ENCODE measurements at regions of chr14 and their contacts with region 1.

Region 1: GRCh38 chr14:23120541-23121251 is 1.6 kb upstream of the CEBPE start:
- DNase-seq: peak; percentile 60
- ATAC-seq: peak; percentile 96
- H3K4me3 ChIP-seq: no peak overlapping the region; the same call in 1 of the 2 replicates
- H3K27ac ChIP-seq: peak overlapping the region; percentile 24; the same call in 1 of the 2 replicates
- H3K4me1 ChIP-seq: peaks cover 20% of the 10 kb centered on the region
- H3K27me3 ChIP-seq: no peaks in the 10 kb centered on the region; a peak in 2 of 4 replicates
- CTCF ChIP-seq: peak; percentile 100; a peak in 5 of 6 replicates
- EP300 ChIP-seq: no peak
- POLR2A ChIP-seq: no peak
- RAD21 ChIP-seq: peak; percentile 93

Region 2: GRCh38 chr14:23085458-23085857 is 35.2 kb before region 1 on chr14:
- CTCF ChIA-PET with region 1: interaction called, 23 read pairs
- POLR2A ChIA-PET with region 1: no interaction called
- RAD21 ChIA-PET with region 1: no interaction called
- SMC1A ChIA-PET with region 1: interaction called, 3 read pairs
- in situ Hi-C with region 1: no loop called
- intact Hi-C with region 1: no loop called
- DNase-seq: no peak
- ATAC-seq: no peak
- H3K4me3 ChIP-seq: no peak overlapping the region
- H3K27ac ChIP-seq: no peak overlapping the region
- H3K4me1 ChIP-seq: no peaks in the 10 kb centered on the region
- H3K27me3 ChIP-seq: no peaks in the 10 kb centered on the region
- CTCF ChIP-seq: no peak
- EP300 ChIP-seq: no peak
- POLR2A ChIP-seq: no peak
- RAD21 ChIP-seq: no peak

Region 3: GRCh38 chr14:23130871-23131270 is 10.2 kb after region 1 on chr14:
- CTCF ChIA-PET with region 1: interaction called, 24 read pairs
- POLR2A ChIA-PET with region 1: no interaction called
- RAD21 ChIA-PET with region 1: interaction called, 4 read pairs
- SMC1A ChIA-PET with region 1: interaction called, 10 read pairs
- in situ Hi-C with region 1: no loop called
- intact Hi-C with region 1: no loop called
- DNase-seq: no peak
- ATAC-seq: no peak
- H3K4me3 ChIP-seq: no peak overlapping the region
- H3K27ac ChIP-seq: no peak overlapping the region
- H3K4me1 ChIP-seq: no peaks in the 10 kb centered on the region
- H3K27me3 ChIP-seq: no peaks in the 10 kb centered on the region; a peak in 1 of 4 replicates
- CTCF ChIP-seq: no peak
- EP300 ChIP-seq: no peak
- POLR2A ChIP-seq: no peak
- RAD21 ChIP-seq: no peak

Region 4: GRCh38 chr14:23186913-23187654 is 66.4 kb after region 1 on chr14:
- CTCF ChIA-PET with region 1: interaction called, 127 read pairs
- POLR2A ChIA-PET with region 1: no interaction called
- RAD21 ChIA-PET with region 1: interaction called, 13 read pairs
- SMC1A ChIA-PET with region 1: interaction called, 34 read pairs
- in situ Hi-C with region 1: loop called (anchors 10 kb)
- intact Hi-C with region 1: loop called (anchors 1 kb)
- DNase-seq: peak; percentile 5
- ATAC-seq: peak; percentile 73
- H3K4me3 ChIP-seq: no peak overlapping the region
- H3K27ac ChIP-seq: no peak overlapping the region
- H3K4me1 ChIP-seq: peaks cover 7% of the 10 kb centered on the region; the same call in 1 of the 2 replicates
- H3K27me3 ChIP-seq: peaks cover 1 to 5% of the 10 kb centered on the region in 2 experiments; a peak in 3 of 4 replicates
- CTCF ChIP-seq: peak; percentile 58 to 67 (median 66)
- EP300 ChIP-seq: no peak
- POLR2A ChIP-seq: no peak
- RAD21 ChIP-seq: peak; percentile 71

Region 5: DNA sequence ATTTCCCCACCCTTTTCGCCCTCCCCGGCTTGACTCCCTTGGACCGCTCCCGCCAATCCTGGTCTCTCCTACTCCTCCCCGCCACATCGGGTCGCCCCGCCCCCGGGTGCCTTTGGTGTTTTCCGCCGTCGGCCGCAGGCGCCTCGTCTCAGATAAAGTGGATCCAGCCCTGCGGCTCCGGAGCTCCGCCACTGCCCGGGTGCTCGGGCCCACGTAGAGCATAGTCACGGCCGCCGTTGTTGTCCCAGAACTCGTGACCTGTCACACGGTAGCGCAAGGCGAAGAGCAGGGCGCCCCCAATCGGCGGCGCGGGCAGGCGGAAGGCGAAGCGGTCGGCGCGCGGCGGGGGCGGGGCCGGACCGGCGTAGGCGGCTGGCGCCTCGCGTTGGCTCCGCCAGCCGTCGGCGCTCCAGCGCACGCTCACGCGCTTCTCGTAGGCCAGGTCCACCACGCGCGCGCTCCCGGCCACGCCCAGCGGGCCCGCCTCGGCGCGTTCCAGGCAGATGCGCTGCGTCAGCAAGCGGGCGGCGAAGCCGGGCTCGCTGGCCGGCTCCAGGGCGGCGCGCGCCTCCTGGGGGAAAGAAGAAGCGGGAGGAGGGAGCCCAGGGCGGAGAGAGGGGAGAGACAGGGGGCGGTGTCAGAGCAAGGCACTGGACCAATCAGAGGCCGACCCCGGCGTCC is 180.7 kb after region 1 on chr14:
- CTCF ChIA-PET with region 1: interaction called, 40 read pairs
- POLR2A ChIA-PET with region 1: no interaction called
- RAD21 ChIA-PET with region 1: interaction called, 8 read pairs
- SMC1A ChIA-PET with region 1: interaction called, 10 read pairs
- in situ Hi-C with region 1: no loop called
- intact Hi-C with region 1: loop called (anchors 2 kb)
- DNase-seq: peak; percentile 91
- ATAC-seq: peak; percentile 90
- H3K4me3 ChIP-seq: peak overlapping the region; percentile 73
- H3K27ac ChIP-seq: peak overlapping the region; percentile 85
- H3K4me1 ChIP-seq: peaks cover 11% of the 10 kb centered on the region
- H3K27me3 ChIP-seq: no peaks in the 10 kb centered on the region
- CTCF ChIP-seq: peak; percentile 72 to 88 (median 73)
- EP300 ChIP-seq: peak; percentile 39; a peak in 1 of 4 replicates
- POLR2A ChIP-seq: peak; percentile 78
- RAD21 ChIP-seq: peak; percentile 43; the same call in 1 of the 2 replicates

Region 6: DNA sequence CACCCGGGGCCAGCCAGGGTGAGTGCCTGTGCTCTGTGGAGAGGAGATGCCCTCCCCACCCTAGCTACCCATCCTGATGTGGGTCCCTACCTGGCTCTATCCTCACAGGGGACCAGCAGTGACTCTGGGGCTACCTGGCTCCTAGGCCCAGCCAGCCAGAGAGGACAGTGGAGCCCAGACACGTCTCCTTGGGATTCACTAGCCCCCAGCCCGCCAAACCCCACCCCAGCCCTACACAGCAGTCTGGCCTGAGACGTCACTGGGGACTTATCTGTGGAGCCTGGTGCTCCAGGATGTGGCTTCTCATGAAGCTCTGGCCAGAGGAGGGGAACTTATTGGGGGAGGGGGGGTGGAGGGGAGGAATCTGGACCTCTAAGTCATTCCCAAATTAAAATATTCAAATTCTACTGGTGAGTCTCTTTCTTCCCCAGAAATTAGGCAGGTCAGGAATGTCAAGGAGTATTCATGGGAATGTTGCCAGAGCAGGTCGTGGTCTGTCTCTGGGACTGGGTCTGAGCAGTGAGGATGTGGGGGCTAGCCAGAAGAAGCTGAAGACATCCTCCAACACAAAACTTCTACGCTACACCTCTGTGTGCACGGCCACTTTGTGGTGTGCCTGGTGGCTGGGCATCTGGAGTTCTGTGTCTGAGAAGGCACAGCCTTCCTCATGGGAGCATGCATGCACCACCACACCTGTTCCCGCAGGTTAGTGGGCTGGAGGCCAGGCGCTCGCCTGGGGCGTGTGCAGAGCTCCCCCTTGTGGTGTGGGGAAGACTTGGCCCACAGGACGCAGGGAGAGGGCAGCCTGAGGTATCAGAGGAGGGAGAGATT is 258.9 kb after region 1 on chr14:
- CTCF ChIA-PET with region 1: interaction called, 26 read pairs
- POLR2A ChIA-PET with region 1: no interaction called
- RAD21 ChIA-PET with region 1: interaction called, 7 read pairs
- SMC1A ChIA-PET with region 1: interaction called, 14 read pairs
- in situ Hi-C with region 1: no loop called
- intact Hi-C with region 1: loop called (anchors 2 kb)
- DNase-seq: peak; percentile 3
- ATAC-seq: peak; percentile 96
- H3K4me3 ChIP-seq: no peak overlapping the region
- H3K27ac ChIP-seq: no peak overlapping the region
- H3K4me1 ChIP-seq: no peaks in the 10 kb centered on the region
- H3K27me3 ChIP-seq: no peaks in the 10 kb centered on the region; a peak in 1 of 4 replicates
- CTCF ChIP-seq: peak; percentile 92 to 97 (median 95); a peak in 5 of 6 replicates
- EP300 ChIP-seq: no peak
- POLR2A ChIP-seq: no peak
- RAD21 ChIP-seq: peak; percentile 87